Activated CD4-positive, alpha-beta memory T cell treated with anti-CD3 and anti-CD28 coated beads for 36 hours (primary cell): ENCODE measurements at regions of chr15 and their contacts with region 1.

Region 1: DNA sequence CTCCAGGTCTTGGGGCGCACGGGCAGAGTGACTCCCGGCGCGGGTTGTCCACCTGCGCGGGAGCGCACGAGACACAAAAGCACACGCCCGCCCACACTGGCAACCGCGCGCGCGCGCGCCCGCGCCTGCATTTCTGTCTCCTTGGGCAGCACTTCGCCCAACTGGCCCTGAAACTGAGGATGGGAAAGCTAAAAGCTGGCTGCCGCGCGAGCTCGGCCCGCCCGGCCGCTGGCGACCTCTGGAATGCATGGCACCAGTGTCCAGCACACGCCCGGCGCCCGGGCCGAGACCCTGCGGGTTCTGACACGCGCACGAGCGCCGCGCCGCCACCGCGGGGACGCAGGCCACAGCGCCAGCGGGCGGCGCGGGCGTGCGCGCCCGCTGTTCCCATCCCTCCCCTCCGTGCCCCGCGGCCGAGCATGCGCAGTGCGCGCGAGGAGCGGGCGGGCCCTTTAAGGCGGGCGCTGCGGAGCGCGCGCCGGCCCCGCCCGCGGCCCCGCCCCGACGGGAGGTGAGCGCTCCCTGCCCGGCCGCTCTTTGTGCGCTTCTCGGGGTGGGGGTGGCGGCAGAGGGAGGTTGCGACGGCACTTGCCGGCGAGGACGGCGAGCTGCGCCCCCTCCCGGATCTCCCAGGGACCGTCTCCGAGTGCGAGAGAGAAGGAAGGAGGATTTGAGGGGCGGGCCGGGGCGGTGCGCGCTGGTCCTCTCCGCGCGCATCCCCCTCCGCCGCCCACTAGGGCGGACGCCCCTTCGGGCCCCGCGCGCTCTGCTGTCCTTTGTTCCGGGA is 1.0 kb upstream of the MEX3B start:
- DNase-seq: peak; percentile 92
- H3K4me3 Mint-ChIP-seq: peak overlapping the region; percentile 82
- H3K27ac Mint-ChIP-seq: peak overlapping the region; percentile 80
- H3K4me1 Mint-ChIP-seq: peaks cover 12% of the 10 kb centered on the region
- H3K27me3 Mint-ChIP-seq: peaks cover 26% of the 10 kb centered on the region

Region 2: GRCh38 chr15:80695104-80695910 is 1351.6 kb before region 1 on chr15 and contains the start of gene ABHD17C:
- CTCF ChIA-PET with region 1: no interaction called
- POLR2A ChIA-PET with region 1: no interaction called
- intact Hi-C with region 1: loop called (anchors 10 kb)
- DNase-seq: peak; percentile 55
- H3K4me3 Mint-ChIP-seq: peak within 1 kb of the TSS; percentile 86
- H3K27ac Mint-ChIP-seq: peak within 1 kb of the TSS; percentile 71
- H3K4me1 Mint-ChIP-seq: peaks cover 21% of the 10 kb centered on the region
- H3K27me3 Mint-ChIP-seq: peaks cover 3% of the 10 kb centered on the region
- total RNA-seq, gene ABHD17C: 6.1 to 9.0 TPM

Region 3: DNA sequence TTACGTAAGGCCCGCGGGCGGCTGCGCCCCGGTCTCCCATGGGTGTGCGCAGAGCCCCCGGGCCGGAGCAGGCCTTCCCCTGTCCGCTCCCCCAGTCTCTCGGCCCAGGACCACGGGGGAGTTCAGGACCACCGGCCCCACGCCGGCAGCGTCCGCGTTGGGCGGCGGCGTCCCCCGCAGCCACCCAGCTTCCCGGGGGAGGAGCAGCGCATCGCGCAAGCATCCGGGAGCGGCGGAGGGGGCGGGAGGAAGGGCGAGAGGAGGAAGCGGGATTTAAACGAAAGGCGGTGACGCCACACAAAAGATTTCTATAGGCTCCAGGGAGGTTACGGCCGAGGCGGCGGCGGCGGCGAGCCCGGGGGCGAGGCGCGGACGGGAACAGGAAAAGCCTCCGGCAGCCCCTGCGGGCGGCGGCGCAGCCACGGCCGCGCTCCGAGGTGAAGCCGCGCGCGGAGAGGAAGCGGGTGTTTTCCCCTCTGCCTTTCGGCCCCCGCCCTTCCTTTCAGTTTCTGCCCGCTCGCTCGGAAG is 1046.2 kb before region 1 on chr15 and contains the start of gene TLNRD1:
- CTCF ChIA-PET with region 1: no interaction called
- POLR2A ChIA-PET with region 1: no interaction called
- intact Hi-C with region 1: loop called (anchors 2 kb)
- DNase-seq: peak; percentile 92
- H3K4me3 Mint-ChIP-seq: peak within 1 kb of the TSS; percentile 97
- H3K27ac Mint-ChIP-seq: peak within 1 kb of the TSS; percentile 99
- H3K4me1 Mint-ChIP-seq: peaks cover 42% of the 10 kb centered on the region
- H3K27me3 Mint-ChIP-seq: no peaks in the 10 kb centered on the region
- total RNA-seq, gene TLNRD1: 23.5 to 25.4 TPM

Region 4: DNA sequence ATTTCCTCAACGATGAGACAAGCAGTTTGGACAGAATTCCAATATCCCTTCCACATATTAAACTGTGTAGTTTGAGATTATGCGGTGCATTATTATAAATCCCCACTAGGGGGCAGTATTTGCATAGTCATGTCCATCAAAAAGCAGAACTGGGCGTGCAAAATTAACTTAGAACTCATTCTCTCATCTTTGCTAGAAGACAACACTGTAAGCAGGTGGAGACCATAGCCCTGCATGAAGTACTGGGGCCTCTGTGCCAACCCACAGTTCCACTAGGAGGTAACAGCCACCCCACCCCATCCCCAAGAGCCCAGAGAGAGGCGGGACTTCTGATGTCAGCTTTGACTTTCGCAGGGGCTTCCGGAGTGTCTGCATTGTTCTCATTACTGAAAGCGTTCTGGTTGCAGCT is 566.2 kb before region 1 on chr15:
- CTCF ChIA-PET with region 1: interaction called, 4 read pairs
- POLR2A ChIA-PET with region 1: no interaction called
- intact Hi-C with region 1: loop called (anchors 1 kb)
- DNase-seq: no peak
- H3K4me3 Mint-ChIP-seq: no peak overlapping the region
- H3K27ac Mint-ChIP-seq: no peak overlapping the region
- H3K4me1 Mint-ChIP-seq: no peaks in the 10 kb centered on the region
- H3K27me3 Mint-ChIP-seq: no peaks in the 10 kb centered on the region

Region 5: DNA sequence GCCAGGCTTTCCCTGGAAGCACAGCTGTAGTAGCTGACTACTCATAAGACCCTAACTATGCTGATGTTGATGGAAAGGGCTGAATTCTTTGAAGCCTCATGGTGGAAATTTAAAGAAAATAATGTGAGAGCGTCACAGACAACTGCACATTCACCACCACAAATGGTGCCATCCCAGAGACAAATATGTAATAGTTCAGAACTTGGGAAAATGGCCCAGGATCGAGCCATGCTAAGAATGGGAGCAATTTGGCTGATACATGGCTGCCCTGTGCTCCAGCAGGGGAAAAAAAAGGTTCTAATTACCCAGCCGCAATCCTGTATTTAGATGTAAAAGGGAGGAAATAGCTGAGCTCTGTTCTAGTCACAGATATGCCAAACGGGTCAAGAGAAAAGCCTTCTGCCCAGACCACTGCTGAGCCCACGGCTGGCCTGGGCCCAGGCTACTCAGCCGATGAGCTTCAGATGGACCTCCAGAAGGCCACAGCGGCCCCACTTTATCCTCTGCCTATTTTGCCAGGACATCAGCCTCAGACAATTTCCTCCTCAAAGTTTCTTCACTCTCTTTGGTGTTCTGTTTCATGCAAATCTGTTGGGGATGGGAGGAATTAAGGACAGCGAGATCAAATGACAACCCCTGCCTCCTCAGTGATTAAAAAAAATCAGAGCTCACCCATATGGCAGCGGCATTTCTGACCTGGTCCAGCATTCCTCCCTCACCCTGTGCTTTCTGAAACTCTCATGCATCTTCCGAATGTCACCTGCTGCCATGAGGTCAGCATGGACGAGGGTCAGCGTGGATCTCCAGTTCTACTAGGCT is 53.5 kb after region 1 on chr15:
- CTCF ChIA-PET with region 1: no interaction called
- POLR2A ChIA-PET with region 1: no interaction called
- intact Hi-C with region 1: no loop called
- DNase-seq: no peak
- H3K4me3 Mint-ChIP-seq: no peak overlapping the region
- H3K27ac Mint-ChIP-seq: no peak overlapping the region
- H3K4me1 Mint-ChIP-seq: no peaks in the 10 kb centered on the region
- H3K27me3 Mint-ChIP-seq: peaks cover 4% of the 10 kb centered on the region

Region 6: DNA sequence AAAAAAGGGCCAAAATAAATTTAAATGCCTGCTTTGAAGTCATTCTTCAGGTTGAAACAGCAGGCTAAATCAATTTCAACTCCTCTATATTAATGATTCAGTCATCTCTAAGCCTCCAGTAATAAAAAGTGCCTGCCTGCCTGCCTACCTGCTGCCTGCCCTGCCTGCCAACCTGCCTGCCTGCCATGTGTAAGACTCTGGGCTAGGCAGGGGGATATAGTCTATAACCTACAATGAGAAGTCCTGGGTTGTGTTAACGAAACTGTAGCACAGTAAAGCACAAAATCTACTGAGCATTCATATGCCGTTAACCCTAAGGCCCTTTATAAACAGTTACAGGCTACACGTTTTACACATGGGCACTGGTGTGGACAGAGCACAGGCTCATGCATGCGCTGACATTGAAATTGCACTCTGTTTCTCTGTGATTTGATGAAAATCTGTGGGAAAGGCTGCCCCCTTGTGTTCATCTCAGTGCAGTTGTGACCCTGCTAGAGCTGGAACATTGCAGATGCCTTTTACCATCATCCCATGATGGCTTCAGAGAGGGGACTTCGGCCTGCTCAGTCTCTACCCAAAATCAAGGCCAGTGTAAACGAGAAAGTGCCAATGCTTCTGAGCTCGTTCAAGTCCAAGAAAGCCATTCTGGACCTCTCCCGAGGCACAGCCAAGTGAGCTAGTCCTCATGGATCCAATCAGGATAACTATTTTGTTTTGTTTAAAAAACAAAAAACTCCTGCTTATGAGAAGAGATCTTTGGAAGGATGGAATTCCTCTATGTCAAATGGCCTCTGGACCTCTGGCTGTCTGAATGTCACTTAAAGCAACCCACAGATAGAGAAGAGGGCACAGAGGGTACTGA is 151.1 kb after region 1 on chr15:
- CTCF ChIA-PET with region 1: no interaction called
- POLR2A ChIA-PET with region 1: interaction called, 11 read pairs
- intact Hi-C with region 1: no loop called
- DNase-seq: peak; percentile 62
- H3K4me3 Mint-ChIP-seq: no peak overlapping the region
- H3K27ac Mint-ChIP-seq: no peak overlapping the region
- H3K4me1 Mint-ChIP-seq: no peaks in the 10 kb centered on the region
- H3K27me3 Mint-ChIP-seq: no peaks in the 10 kb centered on the region

Region 7: GRCh38 chr15:82262422-82263026 is 215.7 kb after region 1 on chr15 and contains the starts of genes EFL1 and SAXO2:
- CTCF ChIA-PET with region 1: no interaction called
- POLR2A ChIA-PET with region 1: interaction called, 6 read pairs
- intact Hi-C with region 1: loop called (anchors 2 kb)
- DNase-seq: peak; percentile 95
- H3K4me3 Mint-ChIP-seq: peak within 1 kb of the TSS; percentile 88
- H3K27ac Mint-ChIP-seq: peak within 1 kb of the TSS; percentile 83
- H3K4me1 Mint-ChIP-seq: peaks cover 27% of the 10 kb centered on the region
- H3K27me3 Mint-ChIP-seq: no peaks in the 10 kb centered on the region
- total RNA-seq, gene EFL1: 27.7 to 28.1 TPM
- total RNA-seq, gene SAXO2: 0.81 TPM in 1 of 2 experiments, not detected in the other